A673 (cell line): ENCODE measurements at regions of chr17 and their contacts with region 1.

Region 1: GRCh38 chr17:17457680-17458079 is 19.1 kb upstream of the MED9 start:
- DNase-seq: no peak
- H3K4me3 ChIP-seq: no peak overlapping the region
- H3K27ac ChIP-seq: no peak overlapping the region
- H3K4me1 ChIP-seq: no peaks in the 10 kb centered on the region
- H3K27me3 ChIP-seq: peaks cover 10% of the 10 kb centered on the region
- CTCF ChIP-seq: no peak

Region 2: DNA sequence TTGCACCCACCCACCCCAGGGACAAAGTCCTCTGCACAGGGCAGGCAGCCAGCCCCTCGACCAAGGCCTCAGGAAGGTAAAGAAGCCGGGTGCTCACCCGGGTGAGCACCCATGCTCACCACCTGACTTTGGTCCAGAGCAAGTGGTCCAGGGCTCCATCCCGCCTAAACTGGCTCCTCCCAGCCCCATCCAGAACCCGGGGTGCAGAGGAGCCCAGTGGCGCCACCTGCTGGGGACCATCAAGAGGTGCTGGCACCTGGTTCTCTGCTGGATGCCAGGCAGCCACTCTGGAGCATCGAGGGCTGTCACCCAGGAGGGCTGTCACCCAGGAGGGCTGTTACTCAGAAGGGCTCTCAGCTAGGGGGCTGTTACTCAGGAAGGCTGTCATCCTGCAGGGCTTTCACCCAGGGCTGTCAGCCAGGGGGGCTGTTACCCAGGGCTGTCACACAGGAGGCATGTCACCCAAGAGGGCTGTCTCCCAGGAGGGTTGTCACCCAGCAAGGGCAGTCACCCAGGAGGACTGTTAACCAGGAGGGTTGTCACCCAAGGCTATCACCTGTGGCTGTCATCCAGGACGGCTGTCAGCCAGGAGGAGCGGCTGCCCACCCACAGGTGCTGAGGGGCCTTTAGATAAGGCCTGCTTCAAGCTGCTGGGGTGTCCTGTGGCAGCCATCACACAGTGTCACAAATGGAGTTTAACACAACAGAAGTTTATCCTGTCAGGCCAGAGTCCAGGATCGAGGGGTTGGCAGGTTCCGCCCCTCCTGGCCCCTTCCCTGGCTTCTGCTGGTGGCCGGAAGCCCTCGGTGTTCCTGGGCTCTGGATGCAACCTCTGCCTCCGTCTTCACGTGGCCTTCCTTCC is 584.3 kb before region 1 on chr17:
- CTCF ChIA-PET with region 1: no interaction called
- POLR2A ChIA-PET with region 1: no interaction called
- intact Hi-C with region 1: no loop called
- DNase-seq: peak; percentile 70
- H3K4me3 ChIP-seq: no peak overlapping the region
- H3K27ac ChIP-seq: no peak overlapping the region
- H3K4me1 ChIP-seq: no peaks in the 10 kb centered on the region
- H3K27me3 ChIP-seq: no peaks in the 10 kb centered on the region
- CTCF ChIP-seq: peak; percentile 86

Region 3: GRCh38 chr17:17636272-17636885 is 178.7 kb after region 1 on chr17:
- CTCF ChIA-PET with region 1: no interaction called
- POLR2A ChIA-PET with region 1: interaction called, 21 read pairs
- intact Hi-C with region 1: no loop called
- DNase-seq: no peak
- H3K4me3 ChIP-seq: no peak overlapping the region
- H3K27ac ChIP-seq: no peak overlapping the region
- H3K4me1 ChIP-seq: no peaks in the 10 kb centered on the region
- H3K27me3 ChIP-seq: no peaks in the 10 kb centered on the region
- CTCF ChIP-seq: no peak